IMR-90 (cell line): ENCODE measurements at regions of chr4 and their contacts with region 1.

Region 1: DNA sequence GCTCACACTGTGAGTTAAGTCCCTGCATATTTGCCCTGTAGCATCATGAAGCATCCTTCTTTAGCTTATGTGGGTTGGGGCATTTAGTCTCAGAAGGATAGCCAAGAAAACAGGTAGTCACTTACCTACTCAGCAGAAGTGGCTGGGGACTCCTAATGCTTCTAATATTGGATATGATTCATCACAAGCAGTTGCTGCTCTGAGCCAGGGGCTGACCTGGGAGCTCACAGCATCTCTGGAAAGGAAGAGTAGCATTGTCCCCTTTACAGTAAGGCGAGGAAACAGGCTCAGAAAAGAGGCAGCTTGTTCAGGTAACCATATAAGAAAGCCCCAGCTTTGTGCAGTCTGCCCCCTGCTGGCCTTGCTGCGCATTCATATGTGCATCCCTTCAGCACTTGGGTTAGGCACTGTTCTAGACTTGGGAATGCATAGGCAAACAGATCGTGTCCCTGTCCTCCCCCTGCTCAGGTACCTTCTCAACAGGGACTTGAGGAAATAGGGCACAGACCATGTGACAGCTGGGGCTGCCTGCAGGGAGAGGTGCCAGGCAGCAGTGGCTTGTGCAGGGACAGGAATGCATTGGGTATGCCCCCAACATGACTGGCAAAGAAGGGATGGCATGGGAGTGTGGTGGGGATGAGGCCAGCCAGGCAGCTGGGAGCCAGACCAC is 35.7 kb upstream of the TBC1D14 start:
- DNase-seq: peak; percentile 62
- ATAC-seq: peak; percentile 84
- H3K4me3 ChIP-seq: no peak overlapping the region
- H3K27ac ChIP-seq: no peak overlapping the region
- H3K4me1 ChIP-seq: peaks cover 4% of the 10 kb centered on the region
- H3K27me3 ChIP-seq: no peaks in the 10 kb centered on the region
- CTCF ChIP-seq: peak; percentile 80
- POLR2A ChIP-seq: no peak
- RAD21 ChIP-seq: peak; percentile 84

Region 2: GRCh38 chr4:6716018-6716911 is 157.7 kb before region 1 on chr4 and contains the start of gene BLOC1S4:
- CTCF ChIA-PET with region 1: interaction called, 15 read pairs
- POLR2A ChIA-PET with region 1: no interaction called
- dilution Hi-C with region 1: no loop called
- in situ Hi-C with region 1: loop called (anchors 5 kb)
- intact Hi-C with region 1: loop called (anchors 1 kb)
- DNase-seq: peak; percentile 92
- ATAC-seq: peak; percentile 83
- H3K4me3 ChIP-seq: peak within 1 kb of the TSS; percentile 87
- H3K27ac ChIP-seq: peak within 1 kb of the TSS; percentile 88
- H3K4me1 ChIP-seq: no peaks in the 10 kb centered on the region
- H3K27me3 ChIP-seq: no peaks in the 10 kb centered on the region
- CTCF ChIP-seq: 0 out of 2 replicates have a peak, but pooled peaks have one; percentile 14
- POLR2A ChIP-seq: peak; percentile 66; the same call in 1 of the 2 replicates
- RAD21 ChIP-seq: no peak
- total RNA-seq, gene BLOC1S4: 8.8 and 13.3 TPM in 2 replicates

Region 3: DNA sequence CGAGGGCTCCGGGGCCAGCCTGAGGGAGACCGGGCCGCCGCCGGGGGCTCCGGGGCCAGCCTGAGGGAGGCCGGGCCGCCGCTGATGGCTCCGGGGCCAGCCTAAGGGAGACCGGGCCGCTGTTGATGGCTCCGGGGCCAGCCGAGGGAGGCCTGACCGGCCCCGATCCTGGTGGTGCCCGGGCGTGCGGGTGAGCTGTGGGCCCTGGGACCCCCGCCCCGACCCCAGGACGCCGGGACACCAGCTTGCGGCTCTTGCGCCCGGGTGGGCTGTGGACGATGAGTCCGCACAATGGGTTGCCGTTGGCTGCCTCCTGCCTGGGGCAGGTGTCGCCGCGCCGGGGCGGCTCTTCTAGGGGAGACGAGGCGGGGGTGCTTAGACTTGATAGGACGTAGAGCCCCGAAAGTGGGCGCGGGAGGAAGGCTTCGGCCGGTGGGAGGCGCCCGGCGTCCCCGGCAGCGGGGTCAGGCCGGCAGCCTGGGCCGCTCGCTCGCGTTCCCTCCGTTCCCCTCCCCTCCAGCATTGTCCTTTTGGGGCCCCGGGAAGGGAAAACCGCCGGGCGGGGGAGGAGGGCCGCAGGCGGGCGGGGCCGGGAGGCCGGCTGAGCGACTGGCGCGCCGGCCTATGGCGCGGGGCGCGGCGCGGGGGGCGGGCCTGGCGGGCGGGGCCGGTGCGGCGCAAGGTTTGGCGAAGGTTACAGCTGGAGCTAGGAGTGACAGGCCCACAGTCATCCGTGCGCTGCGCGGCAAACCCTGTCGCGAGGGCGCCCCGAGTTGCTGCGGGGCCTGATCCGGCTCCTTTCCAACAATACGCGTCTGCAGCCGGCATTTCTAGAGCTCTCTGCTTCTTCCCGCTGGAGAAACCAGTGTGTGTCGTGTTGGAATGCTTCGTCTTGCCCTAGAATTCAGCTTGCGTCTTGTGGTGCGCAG is 90.6 kb before region 1 on chr4:
- CTCF ChIA-PET with region 1: interaction called, 4 read pairs
- POLR2A ChIA-PET with region 1: no interaction called
- dilution Hi-C with region 1: no loop called
- in situ Hi-C with region 1: no loop called
- intact Hi-C with region 1: loop called (anchors 2 kb)
- DNase-seq: peak; percentile 79
- ATAC-seq: peak; percentile 83
- H3K4me3 ChIP-seq: peak overlapping the region; percentile 78
- H3K27ac ChIP-seq: peak overlapping the region; percentile 89
- H3K4me1 ChIP-seq: peaks cover 7% of the 10 kb centered on the region
- H3K27me3 ChIP-seq: peaks cover 2% of the 10 kb centered on the region
- CTCF ChIP-seq: peak; percentile 29
- POLR2A ChIP-seq: peak; percentile 77; the same call in 1 of the 2 replicates
- RAD21 ChIP-seq: 0 out of 2 replicates have a peak, but pooled peaks have one; percentile 24

Region 4: DNA sequence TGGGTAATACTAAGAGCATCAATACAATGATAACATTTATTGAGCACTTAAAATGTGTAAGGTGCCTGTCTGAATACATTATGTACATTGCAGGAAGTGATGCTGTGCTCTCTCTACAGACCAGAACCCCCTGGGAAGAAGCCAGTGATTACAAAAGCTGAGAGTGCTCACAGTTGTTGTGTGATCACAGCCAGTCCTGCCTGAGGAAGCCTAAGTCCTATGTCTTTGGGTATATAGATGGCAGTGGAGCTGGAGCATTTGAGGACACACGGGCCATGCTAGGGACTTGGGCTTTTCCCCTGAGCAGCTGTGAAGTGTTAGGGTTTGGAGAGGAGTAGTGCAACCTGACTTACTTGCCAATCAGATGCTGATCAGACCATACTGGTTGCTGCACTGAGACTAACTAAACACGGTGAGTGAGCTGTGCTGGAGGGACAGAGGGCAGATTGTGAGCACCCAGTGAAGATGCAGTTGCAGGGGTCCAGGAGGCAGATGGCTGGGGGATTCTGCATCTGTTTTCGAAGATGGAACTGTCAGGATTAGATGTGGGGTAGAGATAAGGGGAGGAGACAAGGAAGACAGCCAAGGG is 25.1 kb before region 1 on chr4:
- CTCF ChIA-PET with region 1: no interaction called
- POLR2A ChIA-PET with region 1: no interaction called
- dilution Hi-C with region 1: no loop called
- in situ Hi-C with region 1: no loop called
- intact Hi-C with region 1: no loop called
- DNase-seq: peak; percentile 8
- ATAC-seq: no peak
- H3K4me3 ChIP-seq: no peak overlapping the region
- H3K27ac ChIP-seq: no peak overlapping the region
- H3K4me1 ChIP-seq: no peaks in the 10 kb centered on the region
- H3K27me3 ChIP-seq: no peaks in the 10 kb centered on the region
- CTCF ChIP-seq: no peak
- POLR2A ChIP-seq: no peak
- RAD21 ChIP-seq: no peak